ENCODE measurements at regions of chrX and their contacts with region 1.

Region 1: DNA sequence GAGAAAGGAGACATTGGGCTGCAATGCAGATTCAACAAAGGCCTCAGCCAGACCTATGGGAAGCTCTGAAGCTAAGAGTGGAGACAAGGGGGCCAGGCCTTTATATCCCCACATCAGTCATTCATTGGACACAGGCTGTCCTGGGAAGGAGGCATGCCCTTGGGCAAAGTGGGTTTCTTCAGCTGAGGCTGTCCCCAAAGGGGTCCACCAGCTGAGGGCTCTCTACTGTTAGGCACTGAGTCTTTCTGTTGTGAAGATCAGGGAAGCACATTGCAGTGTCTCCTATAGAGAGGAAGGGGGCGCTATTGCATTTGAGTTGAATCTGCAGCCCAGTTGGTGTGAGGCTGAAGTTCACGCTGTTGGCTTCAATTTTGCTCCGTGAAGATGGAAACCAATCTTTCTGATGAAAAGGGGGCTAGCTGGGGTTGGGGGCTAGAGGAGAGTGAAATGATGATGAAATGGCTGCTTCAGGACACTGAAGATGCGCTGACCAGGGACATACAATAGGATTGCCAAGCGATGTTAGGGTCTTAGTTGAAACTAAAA is 48.0 kb downstream of the SLC25A5 start:
- DNase-seq: peak in 3 of 10 donors; percentile 3 to 31 (median 14)
- H3K4me3 ChIP-seq: no peak overlapping the region
- H3K27ac ChIP-seq: no peak overlapping the region
- H3K27me3 ChIP-seq: peaks cover 0 to 36% (median 3%) of the 10 kb centered on the region in 45 donors
- CTCF ChIP-seq: peak; percentile 39 to 82 (median 70)

Region 2: DNA sequence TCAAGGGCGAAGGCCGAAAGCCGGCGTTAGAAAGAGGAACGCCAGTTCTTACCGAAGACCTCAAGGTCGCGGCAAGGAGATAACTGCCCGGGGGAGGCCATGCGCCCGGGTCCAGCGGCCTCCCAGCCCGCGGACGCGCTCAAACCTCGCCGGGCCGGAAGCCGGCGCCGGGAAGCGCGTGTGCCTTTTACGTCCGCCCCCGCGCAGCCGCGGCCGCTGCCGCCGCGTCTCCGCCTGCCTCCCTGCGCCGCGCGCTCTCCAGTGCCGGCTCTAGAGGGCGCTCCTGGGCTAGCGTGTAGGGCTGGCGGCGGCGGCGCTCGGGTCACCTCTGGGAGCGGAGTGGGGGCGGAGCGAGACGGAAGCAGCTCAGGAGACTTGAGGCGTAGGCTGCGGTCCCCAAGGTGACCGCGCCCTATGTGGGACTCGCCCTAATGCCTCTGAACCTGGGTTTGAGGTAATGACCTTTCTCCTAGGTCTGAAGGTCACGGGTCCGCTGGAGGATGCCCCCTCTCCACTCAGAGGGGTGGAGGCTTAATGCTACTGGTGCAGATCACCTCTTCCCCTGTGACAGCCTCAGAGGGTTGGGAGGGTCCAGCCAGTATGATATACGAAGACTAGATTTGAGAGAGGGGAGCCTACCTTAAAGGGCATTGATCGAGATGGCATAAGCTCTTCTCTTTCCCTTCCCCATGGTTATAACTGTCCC is 47.1 kb before region 1 on chrX:
- intact Hi-C with region 1: loop called in 1 of 2 experiments (anchors 10 kb)
- DNase-seq: peak; percentile 63 to 86 (median 78)
- H3K4me3 ChIP-seq: peak overlapping the region; percentile 41 to 88 (median 72)
- H3K27ac ChIP-seq: peak overlapping the region; percentile 32 to 96 (median 88)
- H3K27me3 ChIP-seq: peaks cover 0 to 14% (median 0%) of the 10 kb centered on the region in 45 donors
- CTCF ChIP-seq: peak in 55 of 56 donors; percentile 41 to 81 (median 70)

Region 3: DNA sequence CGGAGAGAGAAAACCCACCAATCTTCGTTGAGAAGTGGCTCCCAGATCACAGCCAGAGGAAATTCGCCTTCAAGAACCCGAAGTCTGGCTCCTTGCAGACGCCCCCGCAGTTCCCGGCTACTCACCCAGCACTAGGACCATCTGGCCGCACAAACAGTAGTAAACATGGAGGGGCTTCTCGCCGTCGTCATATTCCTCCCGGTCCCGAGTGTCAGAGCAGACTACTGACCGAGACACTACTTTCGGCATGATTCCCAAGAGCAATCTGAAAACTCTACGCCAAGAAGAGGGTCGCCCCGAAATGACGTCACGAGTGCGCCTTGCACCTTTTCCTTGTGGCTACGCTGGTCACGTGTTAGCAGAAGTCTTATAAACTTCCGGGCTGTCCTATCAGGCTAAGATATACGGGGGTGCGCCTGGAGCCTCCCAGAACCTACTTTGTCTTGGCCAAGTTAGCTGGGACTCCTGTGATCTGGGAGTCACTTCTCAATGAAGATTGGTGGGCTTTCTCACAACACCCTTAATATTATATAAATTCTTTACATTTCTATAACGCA is 49.0 kb after region 1 on chrX and contains the start of gene STEEP1:
- intact Hi-C with region 1: loop called (anchors 5 kb)
- DNase-seq: peak; percentile 68 to 90 (median 83)
- H3K4me3 ChIP-seq: peak within 1 kb of the TSS; percentile 28 to 77 (median 61)
- H3K27ac ChIP-seq: peak within 1 kb of the TSS in 38 of 59 donors; percentile 13 to 80 (median 57)
- H3K27me3 ChIP-seq: peaks cover 0 to 6% (median 0%) of the 10 kb centered on the region in 45 donors
- CTCF ChIP-seq: peak in 1 of 56 donors; percentile 14
- total RNA-seq, gene STEEP1: 15.1 to 38.0 (median 28.0) TPM

Region 4: GRCh38 chrX:119574394-119575266 is 58.4 kb after region 1 on chrX and contains the start of gene UBE2A:
- intact Hi-C with region 1: loop called (anchors 5 kb)
- DNase-seq: peak; percentile 66 to 87 (median 80)
- H3K4me3 ChIP-seq: peak within 1 kb of the TSS; percentile 44 to 81 (median 69)
- H3K27ac ChIP-seq: peak within 1 kb of the TSS in 57 of 59 donors; percentile 21 to 92 (median 85)
- H3K27me3 ChIP-seq: peaks cover 0 to 36% (median 0%) of the 10 kb centered on the region in 45 donors
- CTCF ChIP-seq: peak in 45 of 56 donors; percentile 7 to 62 (median 36)
- total RNA-seq, gene UBE2A: 27.7 to 49.8 (median 39.2) TPM

Region 5: GRCh38 chrX:119606280-119607015 is 90.2 kb after region 1 on chrX and contains the start of gene NKRF:
- intact Hi-C with region 1: loop called in 1 of 2 experiments (anchors 10 kb)
- DNase-seq: peak; percentile 76 to 90 (median 86)
- H3K4me3 ChIP-seq: peak within 1 kb of the TSS; percentile 45 to 83 (median 71)
- H3K27ac ChIP-seq: peak within 1 kb of the TSS; percentile 50 to 98 (median 92)
- H3K27me3 ChIP-seq: peaks cover 0 to 38% (median 0%) of the 10 kb centered on the region in 45 donors
- CTCF ChIP-seq: peak in 6 of 56 donors; percentile 6 to 26 (median 14)
- total RNA-seq, gene NKRF: 11.2 to 39.9 (median 29.2) TPM

Region 6: DNA sequence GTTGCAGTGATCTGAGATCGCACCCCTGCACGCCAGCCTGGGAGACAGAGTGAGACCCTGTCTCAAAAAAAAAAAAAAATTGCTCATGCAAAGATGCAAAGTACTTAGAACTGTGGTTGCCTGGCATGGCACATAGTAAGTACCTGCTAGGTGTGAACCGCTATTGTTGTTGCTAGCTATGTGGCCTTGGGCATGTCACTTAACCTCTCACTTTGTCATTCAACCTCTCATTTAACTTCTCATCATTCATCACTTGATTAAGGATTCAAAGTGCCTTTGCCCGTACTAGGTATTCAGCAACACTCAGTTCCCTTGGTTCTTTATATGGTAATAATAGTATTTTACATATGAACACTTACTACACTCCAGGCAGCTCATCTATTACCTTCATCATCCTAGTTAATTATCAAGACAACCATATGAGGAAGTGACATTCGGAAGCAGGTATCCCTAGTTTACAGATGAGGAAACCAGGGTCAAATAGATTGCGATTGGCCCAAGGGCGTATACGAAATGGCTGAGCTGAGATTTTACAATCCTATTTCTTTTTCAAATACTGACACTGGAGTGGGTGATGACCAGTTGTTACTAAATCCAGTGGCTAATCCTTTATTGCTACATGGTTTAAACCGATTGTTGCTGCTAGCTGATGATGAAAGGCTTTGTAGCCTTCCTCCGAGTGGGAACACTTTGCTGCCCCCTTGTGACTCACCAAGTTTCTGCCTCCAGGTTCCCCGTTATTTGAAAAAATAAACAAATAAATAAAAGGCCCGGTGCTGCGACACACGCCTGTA is 213.4 kb after region 1 on chrX:
- intact Hi-C with region 1: loop called in 1 of 2 experiments (anchors 5 kb)
- DNase-seq: peak in 3 of 10 donors; percentile 17 to 30 (median 26)
- H3K4me3 ChIP-seq: no peak overlapping the region
- H3K27ac ChIP-seq: no peak overlapping the region
- H3K27me3 ChIP-seq: peaks cover 0 to 43% (median 9%) of the 10 kb centered on the region in 45 donors
- CTCF ChIP-seq: peak in 53 of 56 donors; percentile 29 to 74 (median 51)

Measured in dorsolateral prefrontal cortex (tissue), 120 donors.